CD8-positive, alpha-beta T cell (primary cell): ENCODE measurements at regions of chr17 and their contacts with region 1.

Region 1: DNA sequence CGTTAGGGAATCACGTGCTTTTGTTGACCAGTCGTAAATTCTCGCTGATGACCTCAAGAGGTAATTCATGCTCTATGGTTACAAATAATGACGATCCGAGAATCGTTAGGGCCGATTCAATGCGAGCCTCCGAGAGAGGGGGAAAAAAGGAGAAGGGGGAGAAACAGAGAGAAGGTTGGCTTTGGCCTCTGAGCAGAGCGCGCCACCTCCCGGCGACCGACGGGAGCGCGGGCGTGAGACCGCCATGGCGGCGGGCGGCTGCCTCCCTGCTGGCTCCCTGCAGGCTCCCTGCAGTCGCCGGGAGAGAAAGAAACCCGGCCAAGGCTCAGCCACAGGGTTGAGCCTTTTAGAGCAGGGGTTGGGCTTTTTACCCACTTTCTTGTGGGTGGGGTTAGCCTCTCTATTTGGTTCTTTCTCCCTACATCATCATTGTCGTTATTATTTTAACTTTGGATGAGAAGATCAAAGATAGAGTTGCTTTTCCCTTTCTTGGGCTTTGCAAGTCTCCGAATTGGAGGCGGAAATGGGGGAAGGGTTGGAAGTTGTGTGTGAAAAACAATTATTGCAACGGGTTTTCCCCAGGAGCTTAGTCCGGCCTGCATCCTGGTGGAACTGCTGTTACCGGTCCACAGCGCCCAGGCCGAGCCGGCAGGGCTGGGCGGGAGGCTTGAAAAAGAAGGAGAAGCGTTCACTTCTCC is 410 bp upstream of the HOXB5 start:
- DNase-seq: peak; percentile 69 to 88 (median 80)
- ATAC-seq: peak; percentile 76
- H3K4me3 ChIP-seq: peak overlapping the region in 1 of 2 experiments; percentile 46
- H3K4me3 Mint-ChIP-seq: peak overlapping the region; percentile 81
- H3K27ac ChIP-seq: no peak overlapping the region
- H3K27ac Mint-ChIP-seq: no peak overlapping the region
- H3K4me1 ChIP-seq: peaks cover 41% of the 10 kb centered on the region
- H3K4me1 Mint-ChIP-seq: peaks cover 46% of the 10 kb centered on the region
- H3K27me3 ChIP-seq: peaks cover 43 to 55% of the 10 kb centered on the region in 2 experiments
- H3K27me3 Mint-ChIP-seq: peaks cover 82% of the 10 kb centered on the region
- CTCF ChIP-seq: peak; percentile 85

Region 2: GRCh38 chr17:48084932-48085444 is 509.0 kb before region 1 on chr17:
- CTCF ChIA-PET with region 1: interaction called, 12 read pairs
- POLR2A ChIA-PET with region 1: interaction called, 3 read pairs
- intact Hi-C with region 1: no loop called
- DNase-seq: no peak
- ATAC-seq: no peak
- H3K4me3 ChIP-seq: no peak overlapping the region
- H3K4me3 Mint-ChIP-seq: no peak overlapping the region
- H3K27ac ChIP-seq: no peak overlapping the region
- H3K27ac Mint-ChIP-seq: no peak overlapping the region
- H3K4me1 ChIP-seq: no peaks in the 10 kb centered on the region
- H3K4me1 Mint-ChIP-seq: peaks cover 10% of the 10 kb centered on the region
- H3K27me3 ChIP-seq: no peaks in the 10 kb centered on the region
- H3K27me3 Mint-ChIP-seq: no peaks in the 10 kb centered on the region
- CTCF ChIP-seq: no peak

Region 3: GRCh38 chr17:48307814-48308411 is 286.1 kb before region 1 on chr17:
- CTCF ChIA-PET with region 1: interaction called, 31 read pairs
- POLR2A ChIA-PET with region 1: no interaction called
- intact Hi-C with region 1: loop called in 1 of 2 experiments (anchors 1 kb)
- DNase-seq: peak; percentile 13 to 71 (median 53)
- ATAC-seq: peak; percentile 87
- H3K4me3 ChIP-seq: no peak overlapping the region
- H3K4me3 Mint-ChIP-seq: no peak overlapping the region
- H3K27ac ChIP-seq: no peak overlapping the region
- H3K27ac Mint-ChIP-seq: no peak overlapping the region
- H3K4me1 ChIP-seq: no peaks in the 10 kb centered on the region
- H3K4me1 Mint-ChIP-seq: peaks cover 26% of the 10 kb centered on the region
- H3K27me3 ChIP-seq: no peaks in the 10 kb centered on the region
- H3K27me3 Mint-ChIP-seq: no peaks in the 10 kb centered on the region
- CTCF ChIP-seq: peak; percentile 90

Region 4: GRCh38 chr17:48344246-48344645 is 249.7 kb before region 1 on chr17:
- CTCF ChIA-PET with region 1: interaction called, 20 read pairs
- POLR2A ChIA-PET with region 1: no interaction called
- intact Hi-C with region 1: no loop called
- DNase-seq: no peak
- ATAC-seq: no peak
- H3K4me3 ChIP-seq: no peak overlapping the region
- H3K4me3 Mint-ChIP-seq: no peak overlapping the region
- H3K27ac ChIP-seq: no peak overlapping the region
- H3K27ac Mint-ChIP-seq: no peak overlapping the region
- H3K4me1 ChIP-seq: no peaks in the 10 kb centered on the region
- H3K4me1 Mint-ChIP-seq: peaks cover 14% of the 10 kb centered on the region
- H3K27me3 ChIP-seq: no peaks in the 10 kb centered on the region
- H3K27me3 Mint-ChIP-seq: no peaks in the 10 kb centered on the region
- CTCF ChIP-seq: no peak

Region 5: GRCh38 chr17:48492401-48493298 is 101.3 kb before region 1 on chr17:
- CTCF ChIA-PET with region 1: interaction called, 61 read pairs
- POLR2A ChIA-PET with region 1: interaction called, 5 read pairs
- intact Hi-C with region 1: loop called (anchors 1 to 2 kb)
- DNase-seq: peak; percentile 49 to 80 (median 67)
- ATAC-seq: peak; percentile 96
- H3K4me3 ChIP-seq: peak overlapping the region; percentile 38 to 41
- H3K4me3 Mint-ChIP-seq: peak overlapping the region; percentile 61
- H3K27ac ChIP-seq: no peak overlapping the region
- H3K27ac Mint-ChIP-seq: no peak overlapping the region
- H3K4me1 ChIP-seq: no peaks in the 10 kb centered on the region
- H3K4me1 Mint-ChIP-seq: peaks cover 5% of the 10 kb centered on the region
- H3K27me3 ChIP-seq: peaks cover 0 to 7% of the 10 kb centered on the region in 2 experiments
- H3K27me3 Mint-ChIP-seq: peaks cover 26% of the 10 kb centered on the region
- CTCF ChIP-seq: peak; percentile 83

Region 6: GRCh38 chr17:48522031-48522653 is 71.8 kb before region 1 on chr17:
- CTCF ChIA-PET with region 1: no interaction called
- POLR2A ChIA-PET with region 1: no interaction called
- intact Hi-C with region 1: no loop called
- DNase-seq: no peak
- ATAC-seq: no peak
- H3K4me3 ChIP-seq: no peak overlapping the region
- H3K4me3 Mint-ChIP-seq: no peak overlapping the region
- H3K27ac ChIP-seq: no peak overlapping the region
- H3K27ac Mint-ChIP-seq: no peak overlapping the region
- H3K4me1 ChIP-seq: peaks cover 9% of the 10 kb centered on the region
- H3K4me1 Mint-ChIP-seq: peaks cover 10% of the 10 kb centered on the region
- H3K27me3 ChIP-seq: peaks cover 5 to 10% of the 10 kb centered on the region in 2 experiments
- H3K27me3 Mint-ChIP-seq: peaks cover 45% of the 10 kb centered on the region
- CTCF ChIP-seq: no peak

Region 7: GRCh38 chr17:48603959-48604769 is 10.2 kb after region 1 on chr17:
- CTCF ChIA-PET with region 1: interaction called, 13 read pairs
- POLR2A ChIA-PET with region 1: no interaction called
- intact Hi-C with region 1: no loop called
- DNase-seq: no peak
- ATAC-seq: no peak
- H3K4me3 ChIP-seq: no peak overlapping the region
- H3K4me3 Mint-ChIP-seq: no peak overlapping the region
- H3K27ac ChIP-seq: no peak overlapping the region
- H3K27ac Mint-ChIP-seq: no peak overlapping the region
- H3K4me1 ChIP-seq: peaks cover 13% of the 10 kb centered on the region
- H3K4me1 Mint-ChIP-seq: peaks cover 16% of the 10 kb centered on the region
- H3K27me3 ChIP-seq: peaks cover 39 to 42% of the 10 kb centered on the region in 2 experiments
- H3K27me3 Mint-ChIP-seq: peaks cover 83% of the 10 kb centered on the region
- CTCF ChIP-seq: no peak

Region 8: DNA sequence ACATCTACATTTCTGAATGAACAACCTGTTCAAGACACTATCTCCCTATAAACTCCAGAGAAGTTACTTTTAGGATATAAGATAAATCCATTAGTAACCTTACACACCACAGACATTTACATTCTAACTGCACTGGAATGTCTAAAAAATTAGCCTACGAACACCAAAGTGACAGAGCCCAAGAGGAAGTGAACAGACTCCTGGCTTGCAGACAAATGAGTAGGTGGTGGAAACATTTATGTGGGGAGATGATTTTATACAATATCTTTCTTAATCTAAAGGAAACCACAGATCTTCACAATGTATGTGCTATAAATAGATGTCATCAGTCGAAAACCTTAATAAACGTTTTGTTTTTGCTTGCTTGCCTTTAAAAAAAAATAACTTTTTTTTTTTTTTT is 749.3 kb after region 1 on chr17:
- CTCF ChIA-PET with region 1: no interaction called
- POLR2A ChIA-PET with region 1: no interaction called
- intact Hi-C with region 1: no loop called
- DNase-seq: peak in 2 of 9 experiments; percentile 30 to 58
- ATAC-seq: peak; percentile 43
- H3K4me3 ChIP-seq: no peak overlapping the region
- H3K4me3 Mint-ChIP-seq: peak overlapping the region; percentile 70
- H3K27ac ChIP-seq: peak overlapping the region in 1 of 2 experiments; percentile 58
- H3K27ac Mint-ChIP-seq: peak overlapping the region; percentile 89
- H3K4me1 ChIP-seq: peaks cover 64% of the 10 kb centered on the region
- H3K4me1 Mint-ChIP-seq: peaks cover 65% of the 10 kb centered on the region
- H3K27me3 ChIP-seq: no peaks in the 10 kb centered on the region
- H3K27me3 Mint-ChIP-seq: no peaks in the 10 kb centered on the region
- CTCF ChIP-seq: no peak